B cell (primary cell): ENCODE measurements at regions of chr7 and their contacts with region 1.

Region 1: GRCh38 chr7:133434055-133434865 is 181.4 kb downstream of the EXOC4 start:
- DNase-seq: peak; percentile 28
- ATAC-seq: no peak
- H3K4me3 ChIP-seq: no peak overlapping the region
- H3K4me3 Mint-ChIP-seq: no peak overlapping the region
- H3K27ac ChIP-seq: no peak overlapping the region
- H3K27ac Mint-ChIP-seq: no peak overlapping the region
- H3K4me1 ChIP-seq: no peaks in the 10 kb centered on the region
- H3K4me1 Mint-ChIP-seq: peaks cover 5% of the 10 kb centered on the region
- H3K27me3 ChIP-seq: no peaks in the 10 kb centered on the region
- H3K27me3 Mint-ChIP-seq: no peaks in the 10 kb centered on the region
- CTCF ChIP-seq: peak; percentile 51

Region 2: DNA sequence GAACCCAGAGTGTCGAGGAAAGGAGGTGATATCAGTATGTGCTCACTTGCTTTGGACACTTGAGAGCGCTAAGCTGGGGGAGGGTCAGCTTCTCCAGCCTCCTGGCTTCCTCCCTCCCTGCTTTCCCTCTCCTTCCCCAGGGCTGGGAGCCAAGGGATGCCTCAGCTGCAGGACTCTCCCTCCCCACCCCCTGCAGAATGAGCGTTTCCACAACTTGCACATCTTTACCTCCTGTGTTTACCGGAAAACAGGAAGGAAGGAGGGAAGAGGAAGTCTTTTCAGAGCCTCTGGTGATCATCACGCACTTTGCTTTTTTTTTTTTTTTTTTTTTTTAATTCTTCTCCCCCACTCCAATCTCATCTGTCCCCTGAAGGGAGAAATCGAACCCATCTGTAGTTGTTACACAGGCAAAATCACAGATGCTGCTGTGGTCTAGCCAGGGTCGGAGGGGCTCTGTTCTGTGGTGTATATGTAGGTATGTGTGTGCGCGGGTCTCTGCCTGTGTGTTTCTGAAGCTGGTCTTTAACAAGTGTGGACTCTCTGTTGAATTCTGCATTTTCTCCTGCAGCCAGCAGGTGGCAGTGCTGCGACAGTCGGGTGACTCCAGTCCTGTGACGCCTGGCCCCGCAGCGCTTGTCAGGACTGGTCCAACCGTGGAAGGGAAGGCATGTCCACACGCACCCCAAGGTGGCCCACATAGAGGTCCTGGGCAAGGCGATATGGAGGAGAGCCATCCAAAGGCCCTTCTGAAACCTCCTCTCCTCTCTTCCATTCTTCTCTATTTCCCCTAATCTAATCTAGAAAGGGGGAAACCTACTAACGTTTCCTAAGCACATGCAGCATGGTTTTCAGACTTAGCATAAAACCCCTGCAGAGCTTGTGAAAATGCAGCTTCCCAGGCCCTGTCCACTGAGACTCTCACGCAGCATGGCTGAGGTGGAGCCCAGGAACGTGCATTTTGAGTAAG is 1115.6 kb before region 1 on chr7:
- CTCF ChIA-PET with region 1: interaction called, 35 read pairs
- POLR2A ChIA-PET with region 1: no interaction called
- intact Hi-C with region 1: no loop called
- DNase-seq: peak; percentile 75
- ATAC-seq: peak; percentile 81
- H3K4me3 ChIP-seq: no peak overlapping the region
- H3K4me3 Mint-ChIP-seq: peak overlapping the region; percentile 13
- H3K27ac ChIP-seq: no peak overlapping the region
- H3K27ac Mint-ChIP-seq: no peak overlapping the region
- H3K4me1 ChIP-seq: peaks cover 7 to 10% of the 10 kb centered on the region in 2 donors
- H3K4me1 Mint-ChIP-seq: peaks cover 12% of the 10 kb centered on the region
- H3K27me3 ChIP-seq: peaks cover 0 to 24% (median 8%) of the 10 kb centered on the region in 4 experiments
- H3K27me3 Mint-ChIP-seq: peaks cover 31% of the 10 kb centered on the region
- CTCF ChIP-seq: peak; percentile 82

Region 3: DNA sequence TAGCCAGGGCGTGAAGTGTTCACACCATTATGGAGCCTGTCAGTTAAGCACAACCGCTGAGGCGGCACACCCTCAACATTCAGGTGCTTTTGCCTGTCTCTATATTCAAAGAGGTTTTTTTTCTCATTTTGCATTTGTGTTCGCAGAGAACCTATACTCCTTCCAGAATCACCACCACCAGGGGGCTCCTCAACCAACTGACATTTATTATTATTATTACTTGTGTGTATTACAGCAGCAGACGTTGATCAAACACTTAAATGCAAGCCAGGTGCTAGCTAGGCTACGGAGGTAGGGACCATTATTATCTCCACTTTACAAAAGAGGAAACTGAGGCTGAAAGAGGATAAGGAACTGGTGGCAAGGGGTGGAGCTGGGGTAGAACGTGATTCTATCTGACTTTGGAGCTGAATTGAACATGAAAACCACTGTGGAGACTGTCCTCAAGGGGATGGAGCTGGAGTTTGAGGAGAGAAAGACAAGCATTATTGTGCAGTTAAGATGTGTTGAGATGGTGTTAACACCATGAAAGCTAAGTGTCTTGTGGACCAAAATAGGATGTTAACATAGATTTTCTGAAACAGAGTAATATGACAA is 724.2 kb before region 1 on chr7:
- CTCF ChIA-PET with region 1: interaction called, 21 read pairs
- POLR2A ChIA-PET with region 1: no interaction called
- intact Hi-C with region 1: no loop called
- DNase-seq: peak; percentile 14
- ATAC-seq: no peak
- H3K4me3 ChIP-seq: no peak overlapping the region
- H3K4me3 Mint-ChIP-seq: no peak overlapping the region
- H3K27ac ChIP-seq: no peak overlapping the region
- H3K27ac Mint-ChIP-seq: no peak overlapping the region
- H3K4me1 ChIP-seq: no peaks in the 10 kb centered on the region
- H3K4me1 Mint-ChIP-seq: no peaks in the 10 kb centered on the region
- H3K27me3 ChIP-seq: no peaks in the 10 kb centered on the region
- H3K27me3 Mint-ChIP-seq: no peaks in the 10 kb centered on the region
- CTCF ChIP-seq: peak; percentile 34

Region 4: GRCh38 chr7:133183063-133183778 is 251.0 kb before region 1 on chr7:
- CTCF ChIA-PET with region 1: no interaction called
- POLR2A ChIA-PET with region 1: no interaction called
- intact Hi-C with region 1: no loop called
- DNase-seq: no peak
- ATAC-seq: no peak
- H3K4me3 ChIP-seq: no peak overlapping the region
- H3K4me3 Mint-ChIP-seq: no peak overlapping the region
- H3K27ac ChIP-seq: no peak overlapping the region
- H3K27ac Mint-ChIP-seq: no peak overlapping the region
- H3K4me1 ChIP-seq: no peaks in the 10 kb centered on the region
- H3K4me1 Mint-ChIP-seq: no peaks in the 10 kb centered on the region
- H3K27me3 ChIP-seq: no peaks in the 10 kb centered on the region
- H3K27me3 Mint-ChIP-seq: peaks cover 10% of the 10 kb centered on the region
- CTCF ChIP-seq: no peak

Region 5: GRCh38 chr7:133401225-133401624 is 33.0 kb before region 1 on chr7:
- CTCF ChIA-PET with region 1: no interaction called
- POLR2A ChIA-PET with region 1: no interaction called
- intact Hi-C with region 1: no loop called
- DNase-seq: no peak
- ATAC-seq: no peak
- H3K4me3 ChIP-seq: no peak overlapping the region
- H3K4me3 Mint-ChIP-seq: no peak overlapping the region
- H3K27ac ChIP-seq: no peak overlapping the region
- H3K27ac Mint-ChIP-seq: no peak overlapping the region
- H3K4me1 ChIP-seq: no peaks in the 10 kb centered on the region
- H3K4me1 Mint-ChIP-seq: peaks cover 15% of the 10 kb centered on the region
- H3K27me3 ChIP-seq: no peaks in the 10 kb centered on the region
- H3K27me3 Mint-ChIP-seq: no peaks in the 10 kb centered on the region
- CTCF ChIP-seq: no peak

Region 6: GRCh38 chr7:133412942-133413341 is 21.3 kb before region 1 on chr7:
- CTCF ChIA-PET with region 1: no interaction called
- POLR2A ChIA-PET with region 1: no interaction called
- intact Hi-C with region 1: no loop called
- DNase-seq: no peak
- ATAC-seq: no peak
- H3K4me3 ChIP-seq: no peak overlapping the region
- H3K4me3 Mint-ChIP-seq: no peak overlapping the region
- H3K27ac ChIP-seq: no peak overlapping the region
- H3K27ac Mint-ChIP-seq: no peak overlapping the region
- H3K4me1 ChIP-seq: no peaks in the 10 kb centered on the region
- H3K4me1 Mint-ChIP-seq: peaks cover 5% of the 10 kb centered on the region
- H3K27me3 ChIP-seq: no peaks in the 10 kb centered on the region
- H3K27me3 Mint-ChIP-seq: no peaks in the 10 kb centered on the region
- CTCF ChIP-seq: no peak

Region 7: GRCh38 chr7:133723044-133723443 is 288.8 kb after region 1 on chr7:
- CTCF ChIA-PET with region 1: no interaction called
- POLR2A ChIA-PET with region 1: no interaction called
- intact Hi-C with region 1: no loop called
- DNase-seq: no peak
- ATAC-seq: no peak
- H3K4me3 ChIP-seq: no peak overlapping the region
- H3K4me3 Mint-ChIP-seq: no peak overlapping the region
- H3K27ac ChIP-seq: no peak overlapping the region
- H3K27ac Mint-ChIP-seq: no peak overlapping the region
- H3K4me1 ChIP-seq: no peaks in the 10 kb centered on the region
- H3K4me1 Mint-ChIP-seq: no peaks in the 10 kb centered on the region
- H3K27me3 ChIP-seq: no peaks in the 10 kb centered on the region
- H3K27me3 Mint-ChIP-seq: no peaks in the 10 kb centered on the region
- CTCF ChIP-seq: no peak